ENCODE measurements at regions of chr19 and their contacts with region 1.

Region 1: DNA sequence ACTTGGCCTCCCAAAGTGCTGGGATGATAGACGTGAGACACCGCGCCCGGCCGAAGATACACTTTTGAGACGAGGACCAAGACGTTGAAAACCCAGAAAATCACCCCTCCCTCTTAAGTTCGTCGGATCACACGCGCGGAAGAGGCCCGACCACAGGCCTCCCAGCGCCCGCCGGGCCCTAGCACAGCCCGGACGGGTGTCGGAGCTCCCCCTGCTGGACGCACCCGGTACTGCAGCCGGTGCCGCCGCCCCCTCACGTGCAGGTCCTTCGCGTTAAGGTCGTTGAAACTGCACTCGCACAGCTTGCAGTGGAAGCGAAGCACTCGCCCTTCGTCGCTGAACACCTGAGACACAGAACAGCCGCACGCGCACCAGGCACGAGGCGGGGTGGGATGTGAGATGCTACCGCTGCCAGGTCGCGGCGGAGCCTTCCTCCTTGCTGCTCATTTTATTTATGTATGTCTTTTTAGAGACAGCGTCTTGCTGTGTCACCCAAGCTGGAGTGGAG is 35.7 kb upstream of the MATK start:
- H3K4me3 Mint-ChIP-seq: peak overlapping the region; percentile 11
- H3K27ac Mint-ChIP-seq: no peak overlapping the region
- H3K4me1 Mint-ChIP-seq: peaks cover 35% of the 10 kb centered on the region
- H3K27me3 Mint-ChIP-seq: peaks cover 35% of the 10 kb centered on the region

Region 2: GRCh38 chr19:3762501-3763459 is 59.1 kb before region 1 on chr19 and contains the start of gene MRPL54:
- intact Hi-C with region 1: loop called (anchors 5 kb)
- H3K4me3 Mint-ChIP-seq: peak within 1 kb of the TSS; percentile 96
- H3K27ac Mint-ChIP-seq: peak within 1 kb of the TSS; percentile 96
- H3K4me1 Mint-ChIP-seq: peaks cover 37% of the 10 kb centered on the region
- H3K27me3 Mint-ChIP-seq: no peaks in the 10 kb centered on the region

Region 3: DNA sequence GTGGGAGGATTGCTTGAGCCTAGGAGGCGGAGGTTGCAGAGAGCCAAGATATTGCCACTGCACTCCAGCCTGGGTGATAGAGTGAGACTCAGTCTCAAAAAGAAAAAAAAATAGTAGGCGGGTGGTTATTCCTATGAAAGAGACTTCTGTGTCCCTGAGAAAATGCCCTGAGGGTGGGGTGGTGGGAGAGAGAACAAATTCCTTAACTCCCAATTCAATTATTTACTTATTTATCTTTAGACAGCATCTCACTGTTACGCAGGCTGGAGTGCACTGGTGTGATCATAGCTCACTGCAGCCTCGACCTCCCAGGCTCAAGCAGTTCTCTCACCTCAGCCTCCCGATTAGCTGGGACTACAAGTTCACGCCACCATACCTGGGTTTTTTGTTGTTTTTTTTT is 173.7 kb after region 1 on chr19:
- intact Hi-C with region 1: no loop called
- H3K4me3 Mint-ChIP-seq: no peak overlapping the region
- H3K27ac Mint-ChIP-seq: no peak overlapping the region
- H3K4me1 Mint-ChIP-seq: peaks cover 4% of the 10 kb centered on the region
- H3K27me3 Mint-ChIP-seq: no peaks in the 10 kb centered on the region

Region 4: DNA sequence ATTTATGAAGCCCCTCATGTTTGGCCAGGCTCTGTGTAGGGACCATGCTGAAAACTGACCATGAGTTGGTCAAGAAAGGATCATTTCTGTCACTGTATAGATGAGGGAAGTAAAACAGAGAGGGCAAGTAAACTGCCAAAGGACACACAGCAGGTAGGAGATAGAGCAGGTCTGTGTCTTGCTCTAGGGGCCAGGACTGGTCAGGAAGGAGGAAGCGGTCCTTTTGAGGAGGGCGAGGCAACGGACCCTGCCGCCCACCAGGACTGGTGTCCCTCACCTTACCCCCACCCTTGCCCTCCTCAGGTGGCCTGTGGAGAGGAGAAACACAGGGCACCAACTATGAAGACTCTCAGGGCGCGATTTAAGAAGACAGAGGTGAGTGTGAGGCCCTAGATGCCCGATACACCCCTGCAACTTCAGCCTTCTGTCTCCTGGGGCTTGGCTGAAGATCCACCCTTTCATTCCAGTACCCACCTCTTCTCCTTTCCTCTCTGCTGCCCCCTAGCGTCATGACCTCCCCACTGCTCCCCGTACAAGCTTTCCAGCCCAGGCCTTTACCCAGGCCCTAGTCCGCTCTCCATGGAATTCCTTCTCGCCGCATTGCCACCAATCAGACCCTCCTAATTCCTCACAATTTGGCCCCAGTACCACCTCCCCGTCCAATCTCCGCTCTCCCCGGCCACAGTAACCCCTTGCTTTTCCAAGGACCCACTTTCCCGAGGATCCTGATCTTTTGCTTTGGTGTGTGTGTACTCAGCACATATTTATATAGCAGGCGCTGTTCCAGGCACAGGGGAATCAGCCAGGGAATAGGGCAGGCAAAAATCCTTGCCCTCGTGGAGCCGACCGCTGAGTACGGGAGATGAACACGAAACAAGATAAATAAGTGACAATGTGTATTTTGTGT is 364.4 kb after region 1 on chr19:
- intact Hi-C with region 1: no loop called
- H3K4me3 Mint-ChIP-seq: no peak overlapping the region
- H3K27ac Mint-ChIP-seq: no peak overlapping the region
- H3K4me1 Mint-ChIP-seq: peaks cover 36% of the 10 kb centered on the region
- H3K27me3 Mint-ChIP-seq: peaks cover 9% of the 10 kb centered on the region